HEK293T (cell line): ENCODE measurements at regions of chr14 and their contacts with region 1.

Region 1: GRCh38 chr14:21437063-21437901 is 18.6 kb downstream of the CHD8 start:
- DNase-seq: peak; percentile 94

Region 2: DNA sequence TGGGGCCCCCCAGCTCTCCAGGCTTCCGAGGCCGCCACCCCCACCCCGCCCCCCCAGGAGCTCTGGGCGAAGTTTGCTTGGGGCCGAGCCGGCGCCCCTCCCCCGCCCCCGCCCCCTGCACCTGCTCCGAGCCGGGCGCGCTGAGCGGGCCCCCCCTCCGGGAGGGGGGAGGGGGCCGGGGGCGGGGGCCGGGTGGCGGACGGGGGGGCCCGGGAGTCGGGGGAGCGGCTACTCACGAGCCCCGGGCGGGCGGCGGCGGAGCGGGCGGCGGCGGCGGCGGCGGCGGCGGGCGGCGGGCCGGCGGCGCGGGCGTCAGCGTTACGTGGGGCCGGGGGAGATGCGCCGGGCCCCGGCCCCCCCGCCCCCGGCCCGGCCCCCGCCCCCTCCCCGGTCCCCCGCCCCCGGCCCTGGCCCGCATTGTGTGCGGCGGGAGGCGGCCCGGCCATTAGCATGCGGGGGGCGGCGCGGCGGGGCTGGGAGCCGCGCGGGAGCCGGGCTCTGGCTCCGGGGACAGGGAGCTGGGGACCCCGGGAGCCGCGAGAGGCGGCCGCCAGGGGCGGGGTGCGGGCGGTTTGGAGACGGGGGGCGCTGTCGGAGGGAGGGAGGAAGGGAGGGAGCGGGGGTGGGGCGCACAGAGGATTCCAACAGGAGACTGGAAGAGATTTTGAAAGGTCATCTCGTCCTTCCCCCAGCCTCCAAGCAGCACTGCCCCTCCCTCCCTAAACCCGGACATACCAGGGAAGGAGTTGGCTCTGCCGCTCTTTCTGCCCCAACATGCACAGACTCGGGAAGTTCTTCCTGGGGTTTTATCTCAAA is 339.0 kb before region 1 on chr14 and contains the start of gene ZNF219:
- CTCF ChIA-PET with region 1: no interaction called
- POLR2A ChIA-PET with region 1: no interaction called
- DNase-seq: no peak

Region 3: GRCh38 chr14:21308479-21309237 is 128.6 kb before region 1 on chr14:
- CTCF ChIA-PET with region 1: no interaction called
- POLR2A ChIA-PET with region 1: no interaction called
- DNase-seq: peak; percentile 67

Region 4: DNA sequence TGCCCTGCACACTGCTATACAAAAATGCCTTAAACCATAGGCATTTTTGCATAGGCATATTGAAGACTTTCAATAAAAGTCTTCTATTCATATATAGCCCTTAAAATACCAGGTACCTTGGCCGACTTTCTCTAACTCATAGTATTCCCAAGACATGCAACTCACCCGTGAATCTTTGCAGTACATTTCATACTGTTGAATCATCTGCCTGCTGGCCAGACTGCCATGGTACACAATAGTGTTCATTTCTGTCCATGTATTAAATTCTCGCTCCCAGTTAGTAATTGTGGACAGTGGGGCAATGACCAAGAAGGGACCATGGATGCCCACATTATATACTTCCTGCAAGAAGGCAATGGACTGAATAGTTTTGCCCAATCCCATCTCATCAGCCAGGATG is 29.1 kb before region 1 on chr14:
- CTCF ChIA-PET with region 1: no interaction called
- POLR2A ChIA-PET with region 1: no interaction called
- DNase-seq: no peak

Region 5: DNA sequence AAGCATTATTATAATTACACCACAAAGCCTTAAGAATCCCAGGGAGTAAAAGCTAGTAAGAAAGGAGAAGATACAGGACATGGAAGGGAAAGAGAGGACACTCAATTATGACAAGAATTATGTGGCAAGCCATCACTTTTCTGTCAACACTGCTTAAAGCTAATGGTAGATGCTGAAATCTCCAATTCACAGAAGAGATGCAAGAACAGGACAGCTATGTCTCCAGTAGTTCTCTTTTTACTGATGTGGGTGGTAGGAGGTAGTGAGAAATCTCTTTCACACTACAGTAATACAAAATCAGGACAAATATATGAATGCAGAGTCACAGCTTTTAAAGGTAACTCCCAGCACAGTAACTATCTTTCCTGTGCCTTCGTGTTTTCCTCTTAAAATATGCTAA is 10.6 kb before region 1 on chr14:
- CTCF ChIA-PET with region 1: no interaction called
- POLR2A ChIA-PET with region 1: interaction called, 12 read pairs
- DNase-seq: no peak

Region 6: GRCh38 chr14:21455911-21456667 is 18.8 kb after region 1 on chr14 and contains the start of gene CHD8:
- CTCF ChIA-PET with region 1: no interaction called
- POLR2A ChIA-PET with region 1: interaction called, 57 read pairs
- DNase-seq: peak; percentile 96

Region 7: DNA sequence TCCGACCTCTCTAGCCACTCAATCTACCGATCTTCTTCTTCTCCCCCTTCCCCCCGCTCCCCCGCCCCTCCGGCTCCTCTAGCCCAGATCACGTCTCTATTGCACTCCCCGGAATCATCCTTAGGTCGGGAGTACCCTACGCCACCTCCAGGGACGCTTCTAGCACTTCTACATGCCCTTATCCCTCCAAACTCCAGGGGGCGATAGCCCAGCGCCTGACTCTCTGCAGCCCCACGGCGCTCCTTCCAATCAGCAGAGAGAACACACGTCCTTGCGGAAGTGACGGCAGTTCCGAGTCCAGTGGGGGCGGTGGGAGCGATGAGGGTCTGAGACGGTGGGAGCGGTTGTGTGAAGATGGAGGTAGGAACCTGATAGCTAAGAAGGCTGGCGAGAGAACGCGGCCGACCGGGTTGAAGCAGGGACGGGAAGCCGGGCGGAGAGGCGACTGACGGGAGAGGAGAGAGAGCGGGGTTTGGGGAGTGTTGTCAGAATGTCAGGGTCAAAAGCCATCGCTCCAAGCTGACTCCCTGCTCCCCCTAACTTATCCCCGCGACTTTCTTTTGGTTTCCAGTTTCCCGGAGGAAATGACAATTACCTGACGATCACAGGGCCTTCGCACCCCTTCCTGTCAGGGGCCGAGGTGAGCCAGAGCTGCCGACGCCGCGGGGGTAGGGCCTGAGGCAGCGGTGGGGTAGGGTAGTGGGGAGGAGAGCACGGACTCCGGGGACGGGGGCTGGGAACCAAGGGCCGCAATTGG is 39.8 kb after region 1 on chr14 and contains the starts of genes RAB2B and TOX4:
- CTCF ChIA-PET with region 1: no interaction called
- POLR2A ChIA-PET with region 1: interaction called, 12 read pairs
- DNase-seq: peak; percentile 94